ENCODE measurements at regions of chr5 and their contacts with region 1.

Region 1: DNA sequence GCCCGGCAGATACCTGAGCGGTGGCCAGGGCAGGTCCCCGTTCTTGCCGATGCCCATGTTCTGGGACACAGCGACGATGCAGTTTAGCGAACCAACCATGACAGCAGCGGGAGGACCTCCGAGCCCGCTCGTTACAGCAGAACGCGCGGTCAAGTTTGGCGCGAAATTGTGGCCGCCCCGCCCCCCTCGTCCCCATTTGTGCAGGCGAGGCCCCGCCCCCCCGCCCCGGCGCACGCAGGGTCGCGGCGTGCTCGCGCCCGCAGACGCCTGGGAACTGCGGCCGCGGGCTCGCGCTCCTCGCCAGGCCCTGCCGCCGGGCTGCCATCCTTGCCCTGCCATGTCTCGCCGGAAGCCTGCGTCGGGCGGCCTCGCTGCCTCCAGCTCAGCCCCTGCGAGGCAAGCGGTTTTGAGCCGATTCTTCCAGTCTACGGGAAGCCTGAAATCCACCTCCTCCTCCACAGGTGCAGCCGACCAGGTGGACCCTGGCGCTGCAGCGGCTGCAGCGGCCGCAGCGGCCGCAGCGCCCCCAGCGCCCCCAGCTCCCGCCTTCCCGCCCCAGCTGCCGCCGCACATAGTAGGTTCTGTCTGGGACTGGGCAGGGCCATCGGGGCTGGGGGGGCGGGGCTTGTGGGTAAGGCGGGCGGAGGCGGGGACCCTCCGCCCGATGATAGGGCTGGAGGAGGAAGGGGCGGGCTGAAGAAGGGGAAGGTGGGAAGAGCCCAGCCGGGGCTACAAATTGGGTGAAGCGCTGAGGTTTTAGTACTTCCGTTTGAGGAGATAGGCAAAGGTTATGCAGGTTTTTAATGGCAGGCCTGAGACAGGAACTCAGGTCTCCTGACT is at the starts of genes DHFR and MSH3:
- DNase-seq: peak; percentile 90
- ATAC-seq: peak; percentile 84
- H3K4me3 ChIP-seq: peak within 1 kb of the TSS; percentile 82 to 92 (median 82)
- H3K27ac ChIP-seq: peak within 1 kb of the TSS; percentile 96
- H3K4me1 ChIP-seq: peaks cover 26% of the 10 kb centered on the region
- H3K27me3 ChIP-seq: no peaks in the 10 kb centered on the region
- CTCF ChIP-seq: peak; percentile 53
- EP300 ChIP-seq: no peak
- POLR2A ChIP-seq: peak; percentile 57 to 78
- RAD21 ChIP-seq: peak; percentile 35; the same call in 1 of the 2 replicates
- total RNA-seq, gene DHFR: 59.0 and 77.6 TPM in 2 replicates
- total RNA-seq, gene MSH3: 16.4 and 19.6 TPM in 2 replicates

Region 2: GRCh38 chr5:80346055-80346454 is 308.6 kb before region 1 on chr5:
- CTCF ChIA-PET with region 1: no interaction called
- POLR2A ChIA-PET with region 1: interaction called, 3 read pairs
- in situ Hi-C with region 1: no loop called
- intact Hi-C with region 1: loop called (anchors 5 kb)
- DNase-seq: peak; percentile 44
- ATAC-seq: peak; percentile 90
- H3K4me3 ChIP-seq: no peak overlapping the region
- H3K27ac ChIP-seq: no peak overlapping the region
- H3K4me1 ChIP-seq: peaks cover 11% of the 10 kb centered on the region
- H3K27me3 ChIP-seq: peaks cover 0 to 2% of the 10 kb centered on the region in 2 experiments; a peak in 1 of 5 replicates
- CTCF ChIP-seq: peak; percentile 70
- EP300 ChIP-seq: no peak
- POLR2A ChIP-seq: no peak
- RAD21 ChIP-seq: peak; percentile 11; the same call in 1 of the 2 replicates

Region 3: GRCh38 chr5:80481019-80481893 is 173.4 kb before region 1 on chr5:
- CTCF ChIA-PET with region 1: interaction called, 4 read pairs
- POLR2A ChIA-PET with region 1: interaction called, 4 read pairs
- in situ Hi-C with region 1: no loop called
- intact Hi-C with region 1: loop called (anchors 2 kb)
- DNase-seq: peak; percentile 67
- ATAC-seq: peak; percentile 99
- H3K4me3 ChIP-seq: no peak overlapping the region
- H3K27ac ChIP-seq: no peak overlapping the region
- H3K4me1 ChIP-seq: peaks cover 1% of the 10 kb centered on the region; the same call in 1 of the 2 replicates
- H3K27me3 ChIP-seq: no peaks in the 10 kb centered on the region
- CTCF ChIP-seq: peak; percentile 85
- EP300 ChIP-seq: no peak
- POLR2A ChIP-seq: no peak
- RAD21 ChIP-seq: peak; percentile 56; the same call in 1 of the 2 replicates

Region 4: DNA sequence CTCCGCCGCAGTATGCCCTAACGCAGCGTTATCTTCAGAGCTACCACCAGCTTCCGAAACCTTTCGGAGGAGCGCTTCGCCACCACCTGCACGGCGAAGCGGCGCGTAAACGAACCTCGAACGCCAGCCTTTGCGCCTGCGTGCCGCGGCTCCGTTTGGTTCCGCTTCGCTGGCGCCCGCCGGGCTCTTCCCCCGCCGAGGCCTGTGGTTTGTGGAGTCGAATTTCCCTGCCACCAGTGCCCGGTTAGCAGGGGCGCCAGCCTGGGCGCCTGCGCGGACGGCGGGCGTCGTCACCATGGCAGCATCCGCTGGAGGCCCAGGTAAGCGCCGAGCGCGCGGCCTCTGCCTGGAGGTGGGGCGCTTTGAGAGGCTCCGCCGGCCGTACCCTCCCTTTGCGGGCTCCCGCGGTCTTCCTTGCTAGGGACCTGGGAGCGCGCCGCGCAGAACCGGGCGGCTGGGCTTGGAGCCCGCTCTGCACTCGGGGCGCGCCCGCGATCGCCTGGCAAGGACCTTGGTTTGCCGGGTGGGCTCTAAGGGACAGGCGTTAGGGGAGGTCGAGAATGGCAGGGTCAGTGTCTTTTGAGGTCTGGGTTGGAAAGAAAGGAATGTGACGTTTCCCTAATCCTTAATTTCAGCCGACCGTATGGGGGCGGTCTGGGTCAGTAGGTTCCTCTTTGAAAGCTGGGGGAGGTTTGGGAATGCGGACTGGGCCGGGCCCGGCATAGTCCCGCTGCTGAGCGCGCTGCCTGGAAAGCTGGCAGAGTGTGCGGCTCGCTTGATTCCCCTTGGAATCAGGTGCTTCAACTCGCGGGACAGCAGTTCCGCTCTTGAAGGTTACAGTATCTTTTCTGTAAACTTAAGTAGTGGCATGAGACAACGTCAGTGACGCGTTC is 166.5 kb before region 1 on chr5 and contains the start of gene FAM151B:
- CTCF ChIA-PET with region 1: no interaction called
- POLR2A ChIA-PET with region 1: interaction called, 5 read pairs
- in situ Hi-C with region 1: no loop called
- intact Hi-C with region 1: loop called (anchors 2 kb)
- DNase-seq: peak; percentile 92
- ATAC-seq: peak; percentile 95
- H3K4me3 ChIP-seq: peak within 1 kb of the TSS; percentile 58 to 81 (median 75)
- H3K27ac ChIP-seq: peak within 1 kb of the TSS; percentile 80
- H3K4me1 ChIP-seq: peaks cover 38% of the 10 kb centered on the region
- H3K27me3 ChIP-seq: no peaks in the 10 kb centered on the region; a peak in 1 of 5 replicates
- CTCF ChIP-seq: peak; percentile 69
- EP300 ChIP-seq: no peak
- POLR2A ChIP-seq: peak; percentile 71 to 82
- RAD21 ChIP-seq: no peak; the same call in 1 of the 2 replicates
- total RNA-seq, gene FAM151B: 1.0 and 2.3 TPM in 2 replicates

Region 5: GRCh38 chr5:80591352-80591751 is 63.3 kb before region 1 on chr5:
- CTCF ChIA-PET with region 1: no interaction called
- POLR2A ChIA-PET with region 1: interaction called, 3 read pairs
- in situ Hi-C with region 1: no loop called
- intact Hi-C with region 1: loop called (anchors 10 kb)
- DNase-seq: no peak
- ATAC-seq: no peak
- H3K4me3 ChIP-seq: no peak overlapping the region
- H3K27ac ChIP-seq: no peak overlapping the region
- H3K4me1 ChIP-seq: peaks cover 60% of the 10 kb centered on the region
- H3K27me3 ChIP-seq: no peaks in the 10 kb centered on the region; a peak in 1 of 5 replicates
- CTCF ChIP-seq: no peak
- EP300 ChIP-seq: no peak
- POLR2A ChIP-seq: no peak
- RAD21 ChIP-seq: no peak

Region 6: GRCh38 chr5:80672140-80672736 is 17.6 kb after region 1 on chr5:
- CTCF ChIA-PET with region 1: no interaction called
- POLR2A ChIA-PET with region 1: interaction called, 28 read pairs
- in situ Hi-C with region 1: no loop called
- intact Hi-C with region 1: loop called (anchors 1 kb)
- DNase-seq: peak; percentile 76
- ATAC-seq: peak; percentile 80
- H3K4me3 ChIP-seq: no peak overlapping the region
- H3K27ac ChIP-seq: no peak overlapping the region
- H3K4me1 ChIP-seq: peaks cover 17% of the 10 kb centered on the region
- H3K27me3 ChIP-seq: no peaks in the 10 kb centered on the region
- CTCF ChIP-seq: peak; percentile 82
- EP300 ChIP-seq: no peak
- POLR2A ChIP-seq: no peak
- RAD21 ChIP-seq: peak; percentile 47; the same call in 1 of the 2 replicates

Measured in HepG2 (cell line).